HEK293T (cell line): ENCODE measurements at regions of chr10 and their contacts with region 1.

Region 1: DNA sequence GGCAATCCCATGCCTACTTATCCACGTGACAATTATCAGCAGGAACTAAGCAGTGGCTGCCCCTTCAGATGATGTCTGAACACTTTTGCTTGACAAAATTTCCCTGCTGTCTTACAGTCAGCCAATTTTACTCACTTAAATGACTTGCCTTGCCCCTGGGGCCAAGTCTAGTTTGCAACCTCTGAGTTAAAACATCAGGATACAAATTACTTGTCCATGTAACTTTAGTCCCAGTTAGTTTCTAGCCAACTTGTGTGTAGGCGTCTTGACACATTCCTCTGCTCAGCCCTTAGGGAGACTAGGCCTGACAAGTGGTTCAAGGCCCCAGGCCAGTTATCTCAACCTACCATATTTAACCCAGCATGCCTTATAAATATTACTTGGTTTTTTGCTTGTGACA is 11.6 kb upstream of the TYSND1 start:
- DNase-seq: no peak

Region 2: GRCh38 chr10:70169649-70170364 is 11.7 kb after region 1 on chr10:
- CTCF ChIA-PET with region 1: no interaction called
- POLR2A ChIA-PET with region 1: interaction called, 16 read pairs
- DNase-seq: peak; percentile 29